HEK293T (cell line): ENCODE measurements at regions of chr5 and their contacts with region 1.

Region 1: DNA sequence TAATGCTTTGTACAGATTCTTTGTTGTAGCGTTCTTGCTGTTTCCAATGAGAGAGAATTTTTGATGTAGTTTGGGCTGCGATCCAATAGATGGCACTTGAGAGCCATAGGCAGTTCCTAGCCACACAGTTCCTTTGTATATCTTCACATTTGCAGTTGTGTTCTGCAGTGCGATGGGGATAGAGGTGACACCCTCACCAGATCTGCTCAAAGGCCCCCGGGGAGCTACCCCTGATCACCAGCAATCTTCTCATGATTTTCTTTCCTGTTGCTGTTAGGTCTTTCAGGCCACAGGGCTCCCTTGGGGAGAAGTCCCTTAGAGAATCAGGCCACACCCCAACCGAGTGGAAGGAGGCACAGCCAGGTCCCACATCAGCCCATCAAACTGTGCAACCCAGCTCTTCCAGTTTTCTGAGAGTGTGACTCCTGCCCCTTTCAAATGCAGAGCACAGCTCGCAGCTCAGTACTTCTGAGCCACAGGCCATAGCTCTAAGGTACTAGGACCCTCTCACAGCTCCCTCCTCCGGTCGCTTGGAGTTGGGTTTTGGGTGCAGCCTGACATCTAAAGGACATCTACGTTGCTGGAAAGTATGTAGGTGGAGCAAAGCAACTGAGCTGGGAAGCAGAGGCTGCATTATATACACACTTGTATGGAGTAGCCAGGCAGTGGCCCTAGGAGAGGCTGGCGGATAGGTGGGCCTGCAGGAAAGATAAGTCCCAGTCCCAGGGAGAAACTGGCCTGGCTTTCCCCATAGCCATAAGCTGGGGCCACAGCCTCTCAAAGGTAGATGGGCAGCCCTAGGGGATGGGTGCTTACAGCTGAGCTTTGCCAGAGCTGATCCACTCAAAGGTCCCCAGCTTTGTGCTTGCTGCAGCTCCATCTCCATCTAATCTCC is 353.5 kb downstream of the SLCO4C1 start:
- DNase-seq: peak; percentile 35

Region 2: DNA sequence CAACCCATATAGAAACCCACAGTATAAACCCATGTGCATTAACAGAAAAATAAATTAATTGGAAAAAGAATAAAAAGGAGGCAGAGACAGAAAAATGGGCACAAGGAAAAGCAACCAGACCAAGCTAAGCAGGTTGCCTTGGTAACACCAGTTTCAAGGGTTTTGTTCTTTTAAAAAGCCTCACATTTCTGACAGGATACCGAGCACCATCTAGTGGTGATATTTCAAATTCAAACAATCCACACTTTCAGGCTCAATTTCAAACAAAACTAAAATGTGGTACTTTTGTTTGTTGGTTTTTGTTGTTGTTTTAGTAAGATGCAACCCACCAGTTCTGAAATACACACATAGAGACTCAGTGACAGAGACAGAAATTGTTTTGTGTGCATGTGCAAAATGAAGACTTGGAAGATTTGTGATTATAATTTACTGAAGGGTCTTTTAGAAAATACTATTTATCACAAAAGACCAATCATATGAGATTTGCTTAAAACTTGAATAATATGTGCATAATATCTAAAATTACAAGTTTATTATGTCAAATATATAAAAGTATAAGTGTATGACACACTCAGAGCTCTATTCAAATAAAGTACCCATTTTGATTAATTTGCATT is 35.3 kb after region 1 on chr5:
- CTCF ChIA-PET with region 1: interaction called, 14 read pairs
- POLR2A ChIA-PET with region 1: no interaction called
- DNase-seq: peak; percentile 37

Region 3: DNA sequence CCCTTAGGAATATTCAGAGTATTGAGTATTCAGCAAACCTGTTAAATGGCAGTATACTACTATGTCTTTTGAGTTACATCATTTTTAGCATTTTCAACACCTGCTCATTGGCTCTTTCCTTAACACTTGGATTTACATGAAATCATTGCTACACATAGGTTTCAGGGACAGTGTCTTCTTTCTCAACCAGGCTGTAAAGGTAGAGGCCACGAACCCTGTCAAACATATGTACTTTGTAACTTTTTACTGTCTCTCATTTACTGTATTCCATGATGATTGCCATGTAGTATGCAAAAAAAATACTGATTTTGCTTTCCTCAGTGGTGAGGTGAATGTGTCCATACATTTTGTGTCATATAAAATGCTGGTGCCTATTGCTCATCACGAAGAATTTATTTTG is 89.1 kb after region 1 on chr5:
- CTCF ChIA-PET with region 1: no interaction called
- POLR2A ChIA-PET with region 1: no interaction called
- DNase-seq: no peak

Region 4: DNA sequence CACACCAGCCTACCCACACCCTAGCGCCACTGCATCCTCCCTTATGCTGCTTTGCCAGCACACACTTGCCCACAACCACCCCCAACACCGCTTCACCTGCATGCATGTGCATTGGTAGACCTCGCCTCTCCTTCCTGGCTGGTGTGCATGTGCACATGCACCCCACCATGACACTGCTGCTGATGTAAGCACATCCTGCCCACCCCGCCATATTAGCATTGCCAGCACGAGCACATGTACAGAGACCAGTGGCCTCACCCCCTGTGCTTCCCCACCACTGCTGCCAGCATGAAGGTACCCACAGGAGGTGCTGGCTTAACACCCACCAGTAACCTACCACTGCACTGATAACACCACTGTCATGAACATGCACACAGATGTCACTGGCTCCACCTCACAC is 135.4 kb after region 1 on chr5:
- CTCF ChIA-PET with region 1: no interaction called
- POLR2A ChIA-PET with region 1: no interaction called
- DNase-seq: no peak